GM12878 (cell line): ENCODE measurements at regions of chr4 and their contacts with region 1.

Region 1: DNA sequence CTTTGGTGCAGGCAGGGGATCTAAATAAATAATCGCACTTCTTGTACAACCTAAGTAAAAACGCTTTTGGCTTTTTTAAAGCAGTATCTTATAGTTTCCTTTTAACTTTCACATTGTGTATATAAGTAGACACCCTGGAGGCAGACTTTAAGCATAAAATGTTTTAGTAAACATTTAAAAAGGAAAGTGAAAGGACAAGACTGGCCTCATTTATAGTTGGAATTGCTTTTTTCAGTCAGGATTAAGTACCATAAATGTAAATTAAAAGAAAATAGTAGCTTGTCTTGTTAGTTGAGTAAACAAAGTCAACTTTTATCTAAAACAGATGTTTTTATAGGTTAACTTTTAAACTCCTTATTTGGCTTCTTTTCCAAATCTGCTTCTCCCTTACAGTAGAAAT is 39.7 kb downstream of the PTPN13 start:
- DNase-seq: no peak
- ATAC-seq: 0 out of 3 replicates have a peak, but pooled peaks have one; percentile 16
- H3K4me3 ChIP-seq: no peak overlapping the region
- H3K27ac ChIP-seq: no peak overlapping the region
- H3K4me1 ChIP-seq: no peaks in the 10 kb centered on the region
- H3K27me3 ChIP-seq: no peaks in the 10 kb centered on the region
- CTCF ChIP-seq: no peak
- EP300 ChIP-seq: no peak
- POLR2A ChIP-seq: no peak
- RAD21 ChIP-seq: no peak

Region 2: DNA sequence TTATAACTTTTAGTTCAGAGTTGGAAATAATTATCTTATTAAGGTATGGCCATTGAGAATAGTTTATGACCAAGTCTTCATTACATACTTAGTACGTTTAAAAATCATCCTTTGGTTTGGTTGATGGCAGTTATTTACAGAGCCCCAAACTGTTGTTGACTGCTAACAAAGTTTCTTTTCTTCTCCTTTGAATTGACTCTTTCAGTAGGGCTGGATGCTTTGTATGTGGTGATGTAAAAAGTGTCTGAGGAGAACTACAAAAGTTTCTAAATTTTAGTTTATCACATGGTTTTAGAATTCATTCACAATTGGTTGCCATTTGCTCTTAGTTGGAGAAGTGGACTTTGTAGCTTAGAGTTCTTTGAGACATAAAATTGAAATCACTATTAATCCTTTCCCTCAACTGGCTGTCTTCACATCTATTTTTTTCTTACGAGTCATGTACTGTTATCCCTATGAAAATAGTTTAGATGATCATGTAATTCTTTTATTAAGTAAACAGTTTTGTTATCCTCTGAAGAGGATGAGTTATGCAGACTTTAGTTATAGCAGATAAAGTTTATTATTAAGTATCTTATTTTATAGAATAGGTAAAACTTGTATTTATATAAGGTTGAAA is 25.0 kb before region 1 on chr4:
- CTCF ChIA-PET with region 1: interaction called, 4 read pairs
- POLR2A ChIA-PET with region 1: interaction called, 5 read pairs
- RAD21 ChIA-PET with region 1: interaction called, 4 read pairs
- SMC1A ChIA-PET with region 1: interaction called, 20 read pairs
- in situ Hi-C with region 1: no loop called
- intact Hi-C with region 1: no loop called
- DNase-seq: no peak
- ATAC-seq: no peak
- H3K4me3 ChIP-seq: no peak overlapping the region
- H3K27ac ChIP-seq: no peak overlapping the region
- H3K4me1 ChIP-seq: no peaks in the 10 kb centered on the region
- H3K27me3 ChIP-seq: 0 out of 4 replicates have a peak, but pooled peaks cover 0 to 2% of the 10 kb centered on the region in 2 experiments
- CTCF ChIP-seq: no peak
- EP300 ChIP-seq: no peak
- POLR2A ChIP-seq: no peak
- RAD21 ChIP-seq: no peak

Region 3: GRCh38 chr4:86615501-86615900 is 18.4 kb before region 1 on chr4:
- CTCF ChIA-PET with region 1: interaction called, 4 read pairs
- POLR2A ChIA-PET with region 1: interaction called, 5 read pairs
- RAD21 ChIA-PET with region 1: interaction called, 3 read pairs
- SMC1A ChIA-PET with region 1: interaction called, 54 read pairs
- in situ Hi-C with region 1: no loop called
- intact Hi-C with region 1: no loop called
- DNase-seq: no peak
- ATAC-seq: peak; percentile 71
- H3K4me3 ChIP-seq: no peak overlapping the region
- H3K27ac ChIP-seq: no peak overlapping the region
- H3K4me1 ChIP-seq: no peaks in the 10 kb centered on the region
- H3K27me3 ChIP-seq: 0 out of 4 replicates have a peak, but pooled peaks cover 0 to 1% of the 10 kb centered on the region in 2 experiments
- CTCF ChIP-seq: no peak
- EP300 ChIP-seq: peak in 1 of 2 experiments; percentile 58; a peak in 1 of 4 replicates
- POLR2A ChIP-seq: no peak
- RAD21 ChIP-seq: no peak